MCF 10A (cell line): ENCODE measurements at regions of chr11 and their contacts with region 1.

Region 1: GRCh38 chr11:41201156-41201555 is 258.3 kb downstream of the LRRC4C start:
- DNase-seq: peak; percentile 67
- H3K4me3 Mint-ChIP-seq: no peak overlapping the region
- H3K27ac Mint-ChIP-seq: no peak overlapping the region
- H3K4me1 Mint-ChIP-seq: no peaks in the 10 kb centered on the region
- H3K27me3 Mint-ChIP-seq: no peaks in the 10 kb centered on the region
- CTCF ChIP-seq: peak; percentile 81

Region 2: GRCh38 chr11:40129266-40129665 is 1071.9 kb before region 1 on chr11:
- CTCF ChIA-PET with region 1: no interaction called
- POLR2A ChIA-PET with region 1: no interaction called
- intact Hi-C with region 1: loop called (anchors 1 kb)
- DNase-seq: peak; percentile 34
- H3K4me3 Mint-ChIP-seq: no peak overlapping the region
- H3K27ac Mint-ChIP-seq: no peak overlapping the region
- H3K4me1 Mint-ChIP-seq: peaks cover 9% of the 10 kb centered on the region
- H3K27me3 Mint-ChIP-seq: no peaks in the 10 kb centered on the region
- CTCF ChIP-seq: peak; percentile 57

Region 3: GRCh38 chr11:40293655-40294348 is 907.4 kb before region 1 on chr11:
- CTCF ChIA-PET with region 1: interaction called, 17 read pairs
- POLR2A ChIA-PET with region 1: no interaction called
- intact Hi-C with region 1: no loop called
- DNase-seq: peak; percentile 80
- H3K4me3 Mint-ChIP-seq: peak overlapping the region; percentile 78
- H3K27ac Mint-ChIP-seq: peak overlapping the region; percentile 0
- H3K4me1 Mint-ChIP-seq: peaks cover 9% of the 10 kb centered on the region
- H3K27me3 Mint-ChIP-seq: no peaks in the 10 kb centered on the region
- CTCF ChIP-seq: peak; percentile 83

Region 4: GRCh38 chr11:40306938-40307548 is 894.1 kb before region 1 on chr11:
- CTCF ChIA-PET with region 1: interaction called, 67 read pairs
- POLR2A ChIA-PET with region 1: interaction called, 12 read pairs
- intact Hi-C with region 1: loop called (anchors 1 kb)
- DNase-seq: peak; percentile 65
- H3K4me3 Mint-ChIP-seq: no peak overlapping the region
- H3K27ac Mint-ChIP-seq: no peak overlapping the region
- H3K4me1 Mint-ChIP-seq: peaks cover 18% of the 10 kb centered on the region
- H3K27me3 Mint-ChIP-seq: no peaks in the 10 kb centered on the region
- CTCF ChIP-seq: peak; percentile 74

Region 5: GRCh38 chr11:41175304-41175972 is 25.7 kb before region 1 on chr11:
- CTCF ChIA-PET with region 1: interaction called, 12 read pairs
- POLR2A ChIA-PET with region 1: no interaction called
- intact Hi-C with region 1: no loop called
- DNase-seq: peak; percentile 9
- H3K4me3 Mint-ChIP-seq: no peak overlapping the region
- H3K27ac Mint-ChIP-seq: no peak overlapping the region
- H3K4me1 Mint-ChIP-seq: peaks cover 5% of the 10 kb centered on the region
- H3K27me3 Mint-ChIP-seq: no peaks in the 10 kb centered on the region
- CTCF ChIP-seq: no peak

Region 6: DNA sequence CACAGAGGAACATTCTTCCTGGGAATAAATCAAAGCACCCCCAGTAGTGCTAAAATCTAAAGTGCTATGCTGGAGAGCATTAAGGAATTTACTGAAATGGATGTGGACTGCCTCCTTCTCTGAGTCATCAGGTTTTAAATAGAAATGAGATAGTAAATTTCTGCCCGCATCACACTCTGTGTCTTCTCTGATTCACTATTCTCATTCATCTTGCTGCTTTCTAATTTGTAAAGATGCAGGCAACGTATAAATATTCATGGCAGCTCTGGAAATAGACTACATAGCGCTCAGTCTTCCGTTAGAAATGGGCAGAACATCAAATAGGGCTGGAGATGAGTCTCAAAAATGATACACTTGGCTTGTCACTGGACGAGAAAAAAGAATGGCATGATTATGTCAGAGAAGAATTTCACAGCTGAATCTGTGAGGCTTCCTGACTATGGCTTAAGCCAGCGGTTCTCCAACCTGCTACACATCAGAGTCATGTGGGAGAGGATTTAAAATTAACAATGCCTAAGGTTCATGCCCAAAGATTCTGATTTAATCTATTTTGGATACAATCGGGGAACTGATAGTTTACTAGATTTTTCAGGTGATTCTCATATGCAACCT is 80.1 kb after region 1 on chr11:
- CTCF ChIA-PET with region 1: no interaction called
- POLR2A ChIA-PET with region 1: no interaction called
- intact Hi-C with region 1: no loop called
- DNase-seq: no peak
- H3K4me3 Mint-ChIP-seq: no peak overlapping the region
- H3K27ac Mint-ChIP-seq: no peak overlapping the region
- H3K4me1 Mint-ChIP-seq: peaks cover 6% of the 10 kb centered on the region
- H3K27me3 Mint-ChIP-seq: no peaks in the 10 kb centered on the region
- CTCF ChIP-seq: no peak

Region 7: GRCh38 chr11:41301023-41301422 is 99.9 kb after region 1 on chr11:
- CTCF ChIA-PET with region 1: no interaction called
- POLR2A ChIA-PET with region 1: no interaction called
- intact Hi-C with region 1: no loop called
- DNase-seq: peak; percentile 25
- H3K4me3 Mint-ChIP-seq: no peak overlapping the region
- H3K27ac Mint-ChIP-seq: no peak overlapping the region
- H3K4me1 Mint-ChIP-seq: peaks cover 14% of the 10 kb centered on the region
- H3K27me3 Mint-ChIP-seq: no peaks in the 10 kb centered on the region
- CTCF ChIP-seq: no peak

Region 8: DNA sequence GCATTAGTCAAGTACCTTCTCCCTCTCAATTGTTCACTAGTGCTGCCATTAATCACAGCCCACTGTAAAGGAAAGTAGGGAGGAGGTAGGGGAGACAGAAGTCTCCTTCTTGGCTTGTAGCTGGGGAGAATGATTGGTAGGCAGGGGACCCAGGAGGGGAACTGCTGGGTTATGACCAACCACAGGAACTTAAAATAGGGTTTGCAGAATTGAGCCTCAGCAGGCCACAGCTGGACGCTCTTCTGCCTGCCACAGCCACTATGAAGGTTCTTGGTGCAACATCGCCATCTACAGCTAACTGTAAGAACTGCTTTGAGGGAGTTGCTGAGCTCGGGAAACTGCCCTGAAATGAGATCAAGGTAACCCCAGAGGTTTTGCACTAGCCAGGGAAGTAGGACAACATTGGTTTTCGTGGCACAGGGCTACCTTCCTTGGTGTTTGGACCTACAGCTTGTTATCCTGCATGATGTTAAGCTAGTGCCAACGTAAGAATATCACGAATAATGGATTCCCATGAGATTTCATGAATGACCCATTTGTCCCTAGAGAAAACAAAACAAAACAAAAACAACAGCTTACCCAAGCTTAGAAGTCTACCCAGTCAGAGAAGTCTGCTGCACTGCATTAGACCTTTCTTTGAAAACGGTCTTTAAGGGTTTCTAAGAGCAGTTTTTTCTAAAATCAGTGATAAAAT is 1323.5 kb after region 1 on chr11:
- CTCF ChIA-PET with region 1: interaction called, 4 read pairs
- POLR2A ChIA-PET with region 1: no interaction called
- intact Hi-C with region 1: loop called (anchors 10 kb)
- DNase-seq: peak; percentile 40
- H3K4me3 Mint-ChIP-seq: no peak overlapping the region
- H3K27ac Mint-ChIP-seq: no peak overlapping the region
- H3K4me1 Mint-ChIP-seq: peaks cover 6% of the 10 kb centered on the region
- H3K27me3 Mint-ChIP-seq: no peaks in the 10 kb centered on the region
- CTCF ChIP-seq: peak; percentile 83